B cell (primary cell): ENCODE measurements at regions of chr17 and their contacts with region 1.

Region 1: GRCh38 chr17:31842183-31843069 is 16.6 kb downstream of the COPRS start:
- DNase-seq: peak; percentile 83
- ATAC-seq: peak; percentile 88
- H3K4me3 ChIP-seq: peak overlapping the region in 1 of 5 experiments; percentile 8
- H3K4me3 Mint-ChIP-seq: no peak overlapping the region
- H3K27ac ChIP-seq: no peak overlapping the region
- H3K27ac Mint-ChIP-seq: no peak overlapping the region
- H3K4me1 ChIP-seq: peaks cover 5 to 6% of the 10 kb centered on the region in 2 donors
- H3K4me1 Mint-ChIP-seq: no peaks in the 10 kb centered on the region
- H3K27me3 ChIP-seq: peaks cover 0 to 8% (median 4%) of the 10 kb centered on the region in 4 experiments
- H3K27me3 Mint-ChIP-seq: peaks cover 17% of the 10 kb centered on the region
- CTCF ChIP-seq: peak; percentile 95

Region 2: GRCh38 chr17:31437720-31438420 is 404.6 kb before region 1 on chr17:
- CTCF ChIA-PET with region 1: interaction called, 43 read pairs
- POLR2A ChIA-PET with region 1: no interaction called
- intact Hi-C with region 1: no loop called
- DNase-seq: no peak
- ATAC-seq: no peak
- H3K4me3 ChIP-seq: no peak overlapping the region
- H3K4me3 Mint-ChIP-seq: no peak overlapping the region
- H3K27ac ChIP-seq: no peak overlapping the region
- H3K27ac Mint-ChIP-seq: no peak overlapping the region
- H3K4me1 ChIP-seq: peaks cover 3 to 11% of the 10 kb centered on the region in 2 donors
- H3K4me1 Mint-ChIP-seq: peaks cover 7% of the 10 kb centered on the region
- H3K27me3 ChIP-seq: peaks cover 0 to 5% (median 0%) of the 10 kb centered on the region in 4 experiments
- H3K27me3 Mint-ChIP-seq: no peaks in the 10 kb centered on the region
- CTCF ChIP-seq: no peak

Region 3: GRCh38 chr17:31533546-31534155 is 308.8 kb before region 1 on chr17:
- CTCF ChIA-PET with region 1: interaction called, 262 read pairs
- POLR2A ChIA-PET with region 1: no interaction called
- intact Hi-C with region 1: loop called (anchors 1 kb)
- DNase-seq: no peak
- ATAC-seq: no peak
- H3K4me3 ChIP-seq: no peak overlapping the region
- H3K4me3 Mint-ChIP-seq: no peak overlapping the region
- H3K27ac ChIP-seq: no peak overlapping the region
- H3K27ac Mint-ChIP-seq: no peak overlapping the region
- H3K4me1 ChIP-seq: peaks cover 41 to 53% of the 10 kb centered on the region in 2 donors
- H3K4me1 Mint-ChIP-seq: peaks cover 45% of the 10 kb centered on the region
- H3K27me3 ChIP-seq: no peaks in the 10 kb centered on the region
- H3K27me3 Mint-ChIP-seq: no peaks in the 10 kb centered on the region
- CTCF ChIP-seq: no peak

Region 4: DNA sequence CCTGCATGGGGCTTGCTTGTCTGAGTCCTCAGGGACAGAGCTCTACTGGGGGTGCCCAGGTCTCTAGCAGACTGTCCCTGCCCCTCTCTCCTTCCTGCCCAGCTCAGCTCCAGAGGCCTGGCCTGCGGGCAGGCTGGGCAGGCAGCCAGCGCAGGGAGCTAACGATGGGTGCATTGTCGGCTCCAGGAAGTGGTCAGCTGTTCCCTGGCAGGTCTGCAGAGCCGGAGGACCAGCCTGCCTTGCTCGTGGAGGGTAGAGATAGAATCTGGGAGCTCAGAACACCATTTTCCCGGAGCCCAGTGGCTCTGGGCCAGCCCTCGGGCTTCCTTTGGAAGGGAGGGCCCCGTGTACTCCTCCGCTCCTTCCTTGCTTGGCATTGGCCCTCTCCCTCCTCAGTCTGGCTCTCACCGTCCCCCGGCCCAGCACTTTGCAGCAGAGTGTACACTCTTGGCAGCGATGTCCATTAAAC is 261.4 kb before region 1 on chr17:
- CTCF ChIA-PET with region 1: interaction called, 10 read pairs
- POLR2A ChIA-PET with region 1: no interaction called
- intact Hi-C with region 1: no loop called
- DNase-seq: no peak
- ATAC-seq: no peak
- H3K4me3 ChIP-seq: no peak overlapping the region
- H3K4me3 Mint-ChIP-seq: no peak overlapping the region
- H3K27ac ChIP-seq: no peak overlapping the region
- H3K27ac Mint-ChIP-seq: peak overlapping the region; percentile 12
- H3K4me1 ChIP-seq: peaks cover 10 to 16% of the 10 kb centered on the region in 2 donors
- H3K4me1 Mint-ChIP-seq: peaks cover 15% of the 10 kb centered on the region
- H3K27me3 ChIP-seq: no peaks in the 10 kb centered on the region
- H3K27me3 Mint-ChIP-seq: no peaks in the 10 kb centered on the region
- CTCF ChIP-seq: no peak

Region 5: DNA sequence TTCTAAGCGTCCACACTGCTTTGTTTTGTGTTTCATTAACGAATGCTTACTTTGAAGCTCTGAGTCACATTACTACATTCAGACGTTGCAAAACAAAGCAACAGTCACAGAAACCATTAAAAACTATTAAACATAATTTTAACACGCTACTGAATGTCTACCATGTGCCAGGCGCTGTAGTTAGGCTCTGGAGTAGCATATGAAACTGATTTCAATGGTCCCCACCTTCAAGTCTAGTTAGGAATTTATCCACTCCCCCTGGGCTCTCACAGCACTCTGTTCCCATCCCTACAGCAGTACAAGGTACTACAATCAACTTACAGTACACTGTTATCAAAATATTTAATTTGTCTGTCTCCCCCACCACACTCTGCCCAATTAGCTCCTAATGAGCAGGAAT is 58.5 kb after region 1 on chr17:
- CTCF ChIA-PET with region 1: interaction called, 17 read pairs
- POLR2A ChIA-PET with region 1: no interaction called
- intact Hi-C with region 1: loop called (anchors 1 kb)
- DNase-seq: no peak
- ATAC-seq: no peak
- H3K4me3 ChIP-seq: peak overlapping the region; percentile 76 to 95 (median 90)
- H3K4me3 Mint-ChIP-seq: no peak overlapping the region
- H3K27ac ChIP-seq: peak overlapping the region; percentile 47 to 78
- H3K27ac Mint-ChIP-seq: no peak overlapping the region
- H3K4me1 ChIP-seq: peaks cover 6 to 10% of the 10 kb centered on the region in 2 donors
- H3K4me1 Mint-ChIP-seq: peaks cover 5% of the 10 kb centered on the region
- H3K27me3 ChIP-seq: no peaks in the 10 kb centered on the region
- H3K27me3 Mint-ChIP-seq: no peaks in the 10 kb centered on the region
- CTCF ChIP-seq: no peak